HepG2 (cell line): ENCODE measurements at regions of chr4 and their contacts with region 1.

Region 1: GRCh38 chr4:121096629-121097028 is 24.3 kb upstream of the NDNF start:
- DNase-seq: peak; percentile 7
- ATAC-seq: no peak
- H3K4me3 ChIP-seq: no peak overlapping the region
- H3K27ac ChIP-seq: no peak overlapping the region
- H3K4me1 ChIP-seq: no peaks in the 10 kb centered on the region
- H3K27me3 ChIP-seq: no peaks in the 10 kb centered on the region
- CTCF ChIP-seq: 0 out of 2 replicates have a peak, but pooled peaks have one; percentile 18
- EP300 ChIP-seq: no peak
- POLR2A ChIP-seq: no peak
- RAD21 ChIP-seq: no peak

Region 2: DNA sequence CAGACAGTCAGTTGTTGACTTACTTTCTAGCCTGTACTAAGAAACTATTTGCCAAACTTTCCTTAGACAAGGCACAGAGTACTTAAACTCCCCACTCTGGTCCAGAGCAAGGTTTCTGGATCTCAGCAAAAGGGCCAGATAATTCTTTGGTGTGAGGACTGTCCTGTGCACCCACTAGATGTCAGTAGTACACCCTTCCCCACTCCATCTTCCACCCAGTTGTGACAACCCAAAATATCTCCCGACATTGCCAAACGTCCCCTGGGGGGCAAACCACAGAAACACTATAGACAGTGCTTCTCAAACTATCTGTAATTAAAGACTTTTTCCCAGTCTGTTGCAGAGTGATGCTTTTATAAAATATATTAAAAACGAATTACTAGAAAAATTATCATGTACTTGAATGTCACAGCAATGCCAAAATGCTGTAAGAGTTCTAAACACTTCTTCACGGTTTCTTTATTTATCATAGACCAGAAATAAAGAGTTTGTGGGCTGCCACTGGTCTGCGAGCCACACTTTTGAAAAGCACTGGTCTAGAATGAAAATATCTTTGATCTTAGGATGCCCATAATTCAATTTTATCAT is 377.6 kb before region 1 on chr4:
- CTCF ChIA-PET with region 1: no interaction called
- POLR2A ChIA-PET with region 1: no interaction called
- in situ Hi-C with region 1: no loop called
- intact Hi-C with region 1: loop called (anchors 1 kb)
- DNase-seq: peak; percentile 3
- ATAC-seq: peak; percentile 85
- H3K4me3 ChIP-seq: no peak overlapping the region
- H3K27ac ChIP-seq: no peak overlapping the region
- H3K4me1 ChIP-seq: no peaks in the 10 kb centered on the region
- H3K27me3 ChIP-seq: no peaks in the 10 kb centered on the region
- CTCF ChIP-seq: peak; percentile 52
- EP300 ChIP-seq: no peak
- POLR2A ChIP-seq: no peak
- RAD21 ChIP-seq: no peak

Region 3: GRCh38 chr4:120960656-120961267 is 135.9 kb before region 1 on chr4:
- CTCF ChIA-PET with region 1: no interaction called
- POLR2A ChIA-PET with region 1: no interaction called
- in situ Hi-C with region 1: no loop called
- intact Hi-C with region 1: no loop called
- DNase-seq: no peak
- ATAC-seq: no peak
- H3K4me3 ChIP-seq: no peak overlapping the region
- H3K27ac ChIP-seq: no peak overlapping the region
- H3K4me1 ChIP-seq: no peaks in the 10 kb centered on the region
- H3K27me3 ChIP-seq: no peaks in the 10 kb centered on the region
- CTCF ChIP-seq: no peak
- EP300 ChIP-seq: no peak
- POLR2A ChIP-seq: no peak
- RAD21 ChIP-seq: no peak

Region 4: DNA sequence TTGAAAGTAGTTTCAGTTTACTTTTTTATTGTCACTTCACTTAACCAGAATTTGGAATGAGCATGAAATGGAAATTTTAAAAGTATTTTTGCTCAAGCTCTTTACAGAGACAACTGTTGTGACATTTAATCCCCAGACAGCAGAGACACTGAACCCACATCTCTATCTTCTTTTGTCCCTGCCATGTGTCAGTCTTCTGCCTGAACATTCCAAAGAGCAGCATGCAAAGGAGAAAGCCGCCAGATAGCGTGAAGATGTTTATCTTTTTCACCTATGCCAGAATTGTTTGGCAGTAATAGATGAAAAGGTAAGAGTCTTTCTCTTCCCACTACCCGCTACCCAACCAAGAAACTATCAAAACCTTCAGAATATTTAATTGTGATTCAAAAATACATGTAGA is 71.1 kb before region 1 on chr4:
- CTCF ChIA-PET with region 1: no interaction called
- POLR2A ChIA-PET with region 1: no interaction called
- in situ Hi-C with region 1: no loop called
- intact Hi-C with region 1: loop called (anchors 2 kb)
- DNase-seq: no peak
- ATAC-seq: no peak
- H3K4me3 ChIP-seq: no peak overlapping the region
- H3K27ac ChIP-seq: no peak overlapping the region
- H3K4me1 ChIP-seq: no peaks in the 10 kb centered on the region
- H3K27me3 ChIP-seq: no peaks in the 10 kb centered on the region
- CTCF ChIP-seq: no peak
- EP300 ChIP-seq: no peak
- POLR2A ChIP-seq: no peak
- RAD21 ChIP-seq: no peak

Region 5: DNA sequence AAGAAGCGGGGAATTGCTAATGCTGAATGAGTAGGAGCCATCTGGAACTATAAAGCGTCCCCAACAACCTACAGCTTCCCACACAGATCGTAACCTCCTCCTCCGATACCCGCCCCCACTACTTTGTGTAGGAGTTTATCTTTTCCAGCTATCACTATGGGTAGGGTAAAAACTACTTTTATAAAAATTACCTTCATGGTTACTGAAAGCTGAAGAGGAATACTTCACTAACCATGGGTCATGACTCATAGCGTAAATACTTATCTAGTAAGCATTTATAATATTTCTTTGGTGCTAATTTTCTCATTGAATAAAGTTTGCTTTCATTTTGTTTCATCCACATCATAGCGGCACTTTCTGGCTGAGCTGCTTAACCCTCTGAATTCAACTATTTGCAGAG is 146.9 kb after region 1 on chr4:
- CTCF ChIA-PET with region 1: no interaction called
- POLR2A ChIA-PET with region 1: no interaction called
- in situ Hi-C with region 1: no loop called
- intact Hi-C with region 1: no loop called
- DNase-seq: no peak
- ATAC-seq: no peak
- H3K4me3 ChIP-seq: no peak overlapping the region
- H3K27ac ChIP-seq: no peak overlapping the region
- H3K4me1 ChIP-seq: no peaks in the 10 kb centered on the region
- H3K27me3 ChIP-seq: no peaks in the 10 kb centered on the region
- CTCF ChIP-seq: no peak
- EP300 ChIP-seq: no peak
- POLR2A ChIP-seq: no peak
- RAD21 ChIP-seq: no peak